A673 (cell line): ENCODE measurements at regions of chr7 and their contacts with region 1.

Region 1: DNA sequence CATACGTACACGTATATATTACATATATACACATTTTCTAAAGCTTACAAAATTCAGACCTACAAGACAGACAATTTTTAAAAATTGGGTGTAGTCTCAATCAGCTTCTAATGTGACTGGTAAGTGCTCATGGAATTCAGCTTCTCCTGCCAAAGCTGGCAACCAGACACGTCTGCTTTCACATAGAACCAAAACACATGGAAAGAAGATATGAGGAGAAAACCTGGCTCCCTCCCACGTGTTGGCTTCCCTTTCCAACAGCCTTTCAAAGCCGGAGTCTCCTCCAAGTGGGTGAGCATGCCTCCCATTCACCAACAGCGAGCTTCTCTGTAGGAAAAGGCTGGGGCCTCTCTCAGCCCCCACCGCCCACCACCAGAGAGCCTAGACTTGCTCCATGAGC is 33.4 kb downstream of the CDCA7L start:
- DNase-seq: peak; percentile 53
- H3K4me3 ChIP-seq: no peak overlapping the region
- H3K27ac ChIP-seq: peak overlapping the region; percentile 59
- H3K4me1 ChIP-seq: peaks cover 29% of the 10 kb centered on the region
- H3K27me3 ChIP-seq: peaks cover 13% of the 10 kb centered on the region
- CTCF ChIP-seq: no peak

Region 2: GRCh38 chr7:21945454-21946227 is 33.3 kb after region 1 on chr7 and contains the start of gene CDCA7L:
- CTCF ChIA-PET with region 1: no interaction called
- POLR2A ChIA-PET with region 1: no interaction called
- intact Hi-C with region 1: loop called (anchors 2 kb)
- DNase-seq: peak; percentile 88
- H3K4me3 ChIP-seq: peak within 1 kb of the TSS; percentile 73
- H3K27ac ChIP-seq: peak within 1 kb of the TSS; percentile 96
- H3K4me1 ChIP-seq: peaks cover 38% of the 10 kb centered on the region
- H3K27me3 ChIP-seq: no peaks in the 10 kb centered on the region
- CTCF ChIP-seq: no peak
- total RNA-seq, gene CDCA7L: 80.9 and 89.2 TPM in 2 replicates

Region 3: GRCh38 chr7:22295402-22296264 is 383.3 kb after region 1 on chr7:
- CTCF ChIA-PET with region 1: no interaction called
- POLR2A ChIA-PET with region 1: no interaction called
- intact Hi-C with region 1: no loop called
- DNase-seq: peak; percentile 18
- H3K4me3 ChIP-seq: no peak overlapping the region
- H3K27ac ChIP-seq: no peak overlapping the region
- H3K4me1 ChIP-seq: peaks cover 5% of the 10 kb centered on the region
- H3K27me3 ChIP-seq: no peaks in the 10 kb centered on the region
- CTCF ChIP-seq: no peak